Sciatic nerve (tissue), 2 donors: ENCODE measurements at regions of chr12 and their contacts with region 1.

Region 1: GRCh38 chr12:6858799-6859198 is 6.8 kb downstream of the USP5 start:
- DNase-seq: no peak
- ATAC-seq: no peak

Region 2: GRCh38 chr12:6778574-6779550 is 79.9 kb before region 1 on chr12:
- intact Hi-C with region 1: no loop called
- DNase-seq: peak; percentile 97
- ATAC-seq: peak; percentile 97

Region 3: GRCh38 chr12:6817098-6817497 is 41.7 kb before region 1 on chr12:
- intact Hi-C with region 1: loop called (anchors 1 kb)
- DNase-seq: no peak
- ATAC-seq: no peak

Region 4: DNA sequence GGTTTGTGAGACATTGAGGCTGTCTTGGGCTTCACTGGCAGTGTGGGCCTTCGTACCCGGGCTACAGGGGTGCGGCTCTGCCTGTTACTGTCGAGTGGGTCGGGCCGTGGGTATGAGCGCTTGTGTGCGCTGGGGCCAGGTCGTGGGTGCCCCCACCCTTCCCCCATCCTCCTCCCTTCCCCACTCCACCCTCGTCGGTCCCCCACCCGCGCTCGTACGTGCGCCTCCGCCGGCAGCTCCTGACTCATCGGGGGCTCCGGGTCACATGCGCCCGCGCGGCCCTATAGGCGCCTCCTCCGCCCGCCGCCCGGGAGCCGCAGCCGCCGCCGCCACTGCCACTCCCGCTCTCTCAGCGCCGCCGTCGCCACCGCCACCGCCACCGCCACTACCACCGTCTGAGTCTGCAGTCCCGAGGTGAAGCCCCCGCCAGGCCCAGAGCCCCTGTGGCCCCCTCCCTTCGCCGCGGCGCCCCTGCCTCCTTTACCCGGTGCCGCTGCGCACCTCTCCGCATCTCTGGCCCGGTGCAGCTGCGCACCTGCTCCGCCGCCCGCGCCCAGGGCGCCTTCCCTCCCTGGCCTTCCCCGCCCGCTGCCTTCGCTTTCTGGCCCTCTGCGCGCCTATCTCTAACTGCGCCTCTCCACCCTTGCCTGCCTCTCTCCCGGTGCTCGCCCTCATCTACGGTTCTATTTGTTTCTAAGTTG is 55.6 kb after region 1 on chr12 and contains the start of gene ENO2:
- intact Hi-C with region 1: no loop called
- DNase-seq: peak; percentile 89
- ATAC-seq: peak; percentile 90
- total RNA-seq, gene ENO2: 36.9 TPM

Region 5: GRCh38 chr12:7304456-7304855 is 445.7 kb after region 1 on chr12:
- intact Hi-C with region 1: no loop called
- DNase-seq: no peak
- ATAC-seq: no peak